ENCODE measurements at regions of chr13 and their contacts with region 1.

Region 1: DNA sequence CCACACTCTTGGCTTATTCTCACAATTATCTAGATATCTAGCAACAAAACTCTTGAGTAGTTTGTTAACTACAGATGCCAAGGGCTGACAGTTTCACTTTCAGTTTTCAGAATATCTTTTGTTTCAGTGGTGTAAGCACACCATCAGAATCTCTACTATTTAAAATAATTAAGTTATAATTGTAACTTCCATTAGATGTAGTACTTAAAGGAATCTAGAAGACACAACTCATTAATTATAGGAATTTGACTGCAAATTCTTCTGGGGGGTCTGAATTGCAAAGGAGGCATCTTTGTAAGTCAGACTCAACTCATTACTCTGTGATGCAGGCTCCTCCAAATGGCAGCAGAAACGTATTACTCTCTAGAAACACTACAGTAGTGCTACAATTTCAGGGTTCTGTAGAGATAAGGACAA is 44.9 kb upstream of the USPL1 start:
- DNase-seq: peak in 1 of 5 donors; percentile 17
- ATAC-seq: peak in 3 of 4 donors; percentile 59 to 81 (median 62)
- H3K4me3 ChIP-seq: peak overlapping the region in 10 of 12 donors; percentile 28 to 56 (median 42)
- H3K27ac ChIP-seq: peak overlapping the region in 11 of 12 donors; percentile 1 to 82 (median 53)
- H3K4me1 ChIP-seq: peaks cover 0 to 57% (median 15%) of the 10 kb centered on the region in 12 donors
- H3K27me3 ChIP-seq: no peaks in the 10 kb centered on the region
- CTCF ChIP-seq: peak in 6 of 12 donors; percentile 35 to 52 (median 42)
- POLR2A ChIP-seq: no peak

Region 2: GRCh38 chr13:29771247-29771646 is 801.6 kb before region 1 on chr13:
- intact Hi-C with region 1: no loop called
- DNase-seq: no peak
- ATAC-seq: peak in 1 of 4 donors; percentile 14
- H3K4me3 ChIP-seq: no peak overlapping the region
- H3K27ac ChIP-seq: no peak overlapping the region
- H3K4me1 ChIP-seq: no peaks in the 10 kb centered on the region
- H3K27me3 ChIP-seq: no peaks in the 10 kb centered on the region
- CTCF ChIP-seq: peak; percentile 22 to 68 (median 54)
- POLR2A ChIP-seq: no peak

Region 3: DNA sequence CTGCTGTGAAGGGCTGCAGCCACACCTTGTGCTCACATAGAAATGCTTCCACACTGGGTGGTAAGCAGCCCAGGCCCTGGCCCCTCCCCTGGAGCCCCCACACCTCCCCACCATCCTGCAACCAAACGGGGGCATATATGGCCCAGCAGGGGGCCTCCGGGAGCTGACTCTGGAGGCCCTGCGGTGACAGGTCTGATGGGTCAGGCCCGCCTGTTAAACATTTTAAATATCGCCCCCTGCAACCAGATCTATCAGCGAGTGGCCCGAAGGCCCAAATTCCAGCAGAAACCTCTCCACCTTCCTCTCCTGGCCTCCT is 217.5 kb before region 1 on chr13:
- intact Hi-C with region 1: loop called in 1 of 10 experiments (anchors 10 kb)
- DNase-seq: peak in 1 of 5 donors; percentile 37
- ATAC-seq: peak in 2 of 4 donors; percentile 57 to 73
- H3K4me3 ChIP-seq: no peak overlapping the region
- H3K27ac ChIP-seq: no peak overlapping the region
- H3K4me1 ChIP-seq: peaks cover 0 to 9% (median 0%) of the 10 kb centered on the region in 12 donors
- H3K27me3 ChIP-seq: no peaks in the 10 kb centered on the region
- CTCF ChIP-seq: peak; percentile 43 to 59 (median 51)
- POLR2A ChIP-seq: no peak

Region 4: GRCh38 chr13:30477346-30478195 is 95.3 kb before region 1 on chr13:
- intact Hi-C with region 1: loop called in 2 of 10 experiments (anchors 10 kb)
- DNase-seq: no peak
- ATAC-seq: no peak
- H3K4me3 ChIP-seq: no peak overlapping the region
- H3K27ac ChIP-seq: no peak overlapping the region
- H3K4me1 ChIP-seq: no peaks in the 10 kb centered on the region
- H3K27me3 ChIP-seq: no peaks in the 10 kb centered on the region
- CTCF ChIP-seq: no peak
- POLR2A ChIP-seq: no peak

Region 5: DNA sequence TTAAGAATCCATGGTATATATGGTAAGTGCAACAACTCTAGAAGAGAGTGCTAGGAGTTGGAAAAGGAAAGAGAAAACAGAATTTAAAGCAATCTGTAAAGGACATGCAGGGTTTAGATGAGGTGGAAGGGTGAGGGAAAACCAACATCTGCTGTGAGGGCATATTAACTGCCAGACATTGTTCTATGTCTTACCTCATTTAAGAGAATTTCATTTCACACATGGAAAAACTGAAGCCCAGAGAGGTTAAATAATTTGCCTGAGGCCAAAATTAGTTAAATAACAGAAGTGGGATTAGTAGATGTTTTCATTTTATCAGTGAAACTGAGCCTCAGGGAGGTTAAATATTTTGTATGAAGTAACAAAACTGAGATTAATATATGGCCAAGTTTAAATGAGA is 37.4 kb after region 1 on chr13:
- intact Hi-C with region 1: loop called in 4 of 10 experiments (anchors 5 kb)
- DNase-seq: no peak
- ATAC-seq: no peak
- H3K4me3 ChIP-seq: no peak overlapping the region
- H3K27ac ChIP-seq: no peak overlapping the region
- H3K4me1 ChIP-seq: peaks cover 0 to 19% (median 5%) of the 10 kb centered on the region in 12 donors
- H3K27me3 ChIP-seq: no peaks in the 10 kb centered on the region
- CTCF ChIP-seq: no peak
- POLR2A ChIP-seq: no peak

Measured in heart left ventricle (tissue), 16 donors.